ENCODE measurements at regions of chr9 and their contacts with region 1.

Region 1: DNA sequence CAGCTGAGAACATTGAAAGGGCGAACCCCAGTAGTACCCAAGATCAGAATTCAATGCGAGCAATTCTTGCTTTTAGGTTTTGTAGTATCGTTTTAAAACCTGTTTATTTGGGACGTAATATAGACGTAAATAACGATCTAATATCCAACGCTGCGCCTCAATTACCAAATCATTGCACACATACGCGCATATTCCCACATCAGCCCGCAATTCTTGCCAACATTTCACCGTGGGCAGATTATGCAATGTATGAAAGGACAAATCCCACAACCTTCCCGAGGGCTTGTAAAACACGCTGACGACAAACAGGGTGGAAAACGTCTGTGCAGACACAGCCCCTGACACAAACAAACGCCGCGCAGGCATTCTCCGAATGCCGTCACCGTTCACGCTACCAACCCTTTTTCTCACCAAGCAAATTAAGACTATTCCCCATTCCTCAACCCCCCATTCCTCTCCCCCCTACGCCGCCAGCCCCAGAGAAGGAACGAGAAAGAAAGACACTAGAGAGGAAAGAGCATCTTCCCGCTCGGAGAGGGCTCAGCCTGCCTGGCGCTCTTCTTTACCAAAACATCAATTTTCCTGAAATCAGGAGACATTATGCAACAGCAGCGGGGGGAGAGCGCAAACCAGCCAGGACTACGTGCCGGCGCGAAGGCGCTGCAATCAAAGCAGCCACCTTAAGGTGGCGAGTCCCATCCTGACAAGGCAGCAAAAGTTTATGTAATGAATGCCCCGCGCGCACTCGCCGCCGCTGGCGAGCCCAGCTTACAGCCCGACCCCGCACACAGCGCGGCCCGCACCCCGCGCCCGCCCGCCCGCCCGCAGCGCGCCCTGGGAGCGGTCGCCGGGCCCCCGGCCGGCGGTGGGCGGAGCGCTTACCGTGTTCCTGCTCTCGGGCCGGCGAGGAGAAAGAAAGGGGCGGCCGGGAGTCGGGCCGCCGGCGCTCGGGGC is 597 bp downstream of the NFIL3 start:
- DNase-seq: peak; percentile 66
- H3K4me3 ChIP-seq: peak overlapping the region; percentile 62 to 91 (median 67)
- H3K27ac ChIP-seq: peak overlapping the region; percentile 35
- H3K4me1 ChIP-seq: peaks cover 40% of the 10 kb centered on the region
- H3K27me3 ChIP-seq: no peaks in the 10 kb centered on the region
- CTCF ChIP-seq: peak in 1 of 2 donors; percentile 45

Region 2: DNA sequence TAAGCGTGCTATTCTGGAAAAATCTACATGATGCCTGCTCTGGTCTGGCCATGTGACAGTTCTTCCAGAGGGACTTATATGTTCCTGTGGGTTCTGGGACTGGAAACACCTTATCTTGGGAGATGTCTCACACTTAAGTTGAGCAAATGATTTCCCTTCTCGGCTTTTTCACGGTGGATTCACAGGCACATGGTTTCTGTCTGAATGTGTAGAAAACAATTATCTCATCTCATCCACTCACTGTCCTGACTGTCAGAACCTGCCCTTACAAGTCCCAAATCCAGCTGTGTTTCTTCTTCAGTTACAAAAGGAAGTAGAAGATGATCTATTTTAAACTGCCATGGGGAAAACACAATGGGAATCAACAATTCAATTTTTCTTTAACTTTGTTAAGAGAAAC is 437.4 kb before region 1 on chr9:
- CTCF ChIA-PET with region 1: interaction called, 3 read pairs
- dilution Hi-C with region 1: no loop called
- in situ Hi-C with region 1: no loop called
- intact Hi-C with region 1: loop called (anchors 1 kb)
- DNase-seq: peak; percentile 96
- H3K4me3 ChIP-seq: no peak overlapping the region
- H3K27ac ChIP-seq: peak overlapping the region; percentile 80
- H3K4me1 ChIP-seq: peaks cover 36% of the 10 kb centered on the region
- H3K27me3 ChIP-seq: no peaks in the 10 kb centered on the region
- CTCF ChIP-seq: no peak

Region 3: GRCh38 chr9:91089405-91090129 is 333.5 kb before region 1 on chr9:
- CTCF ChIA-PET with region 1: no interaction called
- dilution Hi-C with region 1: no loop called
- in situ Hi-C with region 1: loop called in 1 of 2 experiments (anchors 25 kb)
- intact Hi-C with region 1: loop called (anchors 1 kb)
- DNase-seq: peak; percentile 29
- H3K4me3 ChIP-seq: no peak overlapping the region
- H3K27ac ChIP-seq: no peak overlapping the region
- H3K4me1 ChIP-seq: no peaks in the 10 kb centered on the region
- H3K27me3 ChIP-seq: no peaks in the 10 kb centered on the region
- CTCF ChIP-seq: peak; percentile 39 to 67

Region 4: DNA sequence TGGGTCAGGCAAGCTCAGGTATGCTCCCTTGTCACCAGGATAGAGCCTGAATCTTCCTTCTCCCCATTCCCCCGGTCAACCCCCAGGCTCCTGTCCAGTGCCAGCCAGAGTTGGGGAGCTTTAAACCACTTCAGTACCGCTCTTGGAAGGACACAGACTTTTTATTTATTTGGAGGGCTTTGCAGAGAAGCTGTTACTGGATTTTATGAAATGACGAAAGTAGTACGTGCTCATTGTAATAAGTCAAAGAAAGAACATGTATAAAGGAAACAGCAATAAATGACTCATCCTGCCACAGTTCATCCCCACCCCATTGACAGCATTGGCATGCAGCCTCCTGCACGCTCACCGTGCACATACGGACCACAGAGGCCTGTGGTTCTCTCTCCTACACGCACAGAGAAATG is 291.6 kb before region 1 on chr9:
- CTCF ChIA-PET with region 1: no interaction called
- dilution Hi-C with region 1: no loop called
- in situ Hi-C with region 1: no loop called
- intact Hi-C with region 1: loop called (anchors 1 kb)
- DNase-seq: peak; percentile 97
- H3K4me3 ChIP-seq: no peak overlapping the region
- H3K27ac ChIP-seq: peak overlapping the region; percentile 91
- H3K4me1 ChIP-seq: peaks cover 19% of the 10 kb centered on the region
- H3K27me3 ChIP-seq: no peaks in the 10 kb centered on the region
- CTCF ChIP-seq: no peak

Region 5: DNA sequence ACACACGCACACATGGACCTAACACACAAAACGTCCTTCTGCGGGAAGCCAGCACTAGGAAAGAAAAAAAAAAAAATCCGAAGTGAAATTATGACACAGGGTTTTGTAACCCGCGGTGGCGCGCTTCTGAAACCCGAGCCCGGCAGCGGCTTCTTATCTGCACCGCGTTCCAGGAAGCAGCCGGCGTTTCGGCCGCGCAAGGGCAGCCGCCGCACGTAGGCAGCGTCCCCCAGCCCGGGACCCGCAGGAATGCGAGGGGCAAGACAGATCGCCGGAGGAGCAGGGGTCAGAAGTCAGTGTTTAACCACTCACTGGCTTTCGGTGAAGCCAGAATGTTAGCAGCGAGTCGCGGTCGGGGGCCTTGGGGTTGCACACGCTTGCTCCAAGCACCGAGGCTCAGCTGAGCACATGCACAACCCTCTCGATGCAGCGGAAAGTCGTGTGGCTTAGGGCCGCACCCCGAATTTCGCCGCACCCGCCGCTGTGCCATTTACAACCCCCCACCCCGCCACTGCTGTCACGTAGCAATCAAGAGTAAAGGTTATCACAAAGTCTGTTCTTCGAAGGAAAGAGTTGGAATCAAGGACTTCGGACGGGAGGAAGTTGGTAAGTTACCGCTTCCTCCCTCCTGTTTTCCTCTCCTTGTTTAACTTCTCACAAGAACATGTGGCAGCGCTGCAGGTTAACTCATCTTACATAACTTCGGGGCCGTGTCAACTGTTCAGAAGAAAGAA is 229.2 kb before region 1 on chr9:
- CTCF ChIA-PET with region 1: no interaction called
- dilution Hi-C with region 1: no loop called
- in situ Hi-C with region 1: no loop called
- intact Hi-C with region 1: loop called (anchors 5 kb)
- DNase-seq: peak; percentile 48
- H3K4me3 ChIP-seq: no peak overlapping the region
- H3K27ac ChIP-seq: peak overlapping the region; percentile 45
- H3K4me1 ChIP-seq: peaks cover 38% of the 10 kb centered on the region
- H3K27me3 ChIP-seq: no peaks in the 10 kb centered on the region
- CTCF ChIP-seq: no peak

Region 6: DNA sequence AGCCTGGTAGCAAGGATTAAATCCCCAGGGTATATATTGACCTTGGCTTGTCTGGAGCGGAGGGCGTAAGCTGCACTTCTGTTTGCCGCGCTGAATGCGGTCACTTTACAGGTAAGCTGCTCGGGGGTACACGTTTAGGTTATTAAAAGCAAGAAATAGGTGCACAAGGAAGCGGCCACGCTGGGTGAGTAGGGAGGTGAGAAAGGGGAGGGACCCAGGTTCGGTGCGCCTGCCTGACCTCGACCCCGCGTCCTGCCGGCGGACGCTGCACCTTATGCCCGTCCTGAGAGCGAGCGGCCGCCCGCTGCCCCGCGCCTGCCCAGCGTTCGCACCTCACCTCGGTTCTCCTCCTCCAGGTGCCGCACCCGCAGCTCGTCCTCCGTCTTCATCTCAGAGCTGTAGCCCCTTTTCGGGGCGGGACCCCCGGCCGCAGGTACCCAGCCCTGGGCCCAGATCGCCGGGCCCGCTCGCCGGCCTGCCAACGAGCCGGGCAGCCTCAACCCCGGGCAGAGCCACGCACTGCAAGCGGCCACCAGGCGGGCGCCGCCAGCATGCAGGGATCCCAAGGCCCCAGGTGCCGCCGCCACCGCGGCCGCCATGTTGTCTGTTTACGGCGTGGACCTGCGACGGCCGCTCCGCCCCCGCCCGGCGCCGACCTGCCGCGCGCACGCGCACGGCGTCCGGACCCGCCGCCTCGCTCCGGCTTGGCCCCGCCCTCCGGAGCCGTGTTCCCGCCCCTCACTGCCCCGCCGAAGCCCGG is 61.6 kb before region 1 on chr9 and contains the start of gene AUH:
- CTCF ChIA-PET with region 1: interaction called, 7 read pairs
- dilution Hi-C with region 1: no loop called
- in situ Hi-C with region 1: no loop called
- intact Hi-C with region 1: loop called (anchors 1 kb)
- DNase-seq: peak; percentile 65
- H3K4me3 ChIP-seq: peak within 1 kb of the TSS; percentile 70 to 99 (median 96)
- H3K27ac ChIP-seq: peak within 1 kb of the TSS; percentile 71
- H3K4me1 ChIP-seq: peaks cover 14% of the 10 kb centered on the region
- H3K27me3 ChIP-seq: no peaks in the 10 kb centered on the region
- CTCF ChIP-seq: no peak
- total RNA-seq, gene AUH: 10.9 to 11.5 TPM

Region 7: GRCh38 chr9:91495450-91495849 is 72.4 kb after region 1 on chr9:
- CTCF ChIA-PET with region 1: no interaction called
- dilution Hi-C with region 1: no loop called
- in situ Hi-C with region 1: no loop called
- intact Hi-C with region 1: no loop called
- DNase-seq: peak; percentile 86
- H3K4me3 ChIP-seq: no peak overlapping the region
- H3K27ac ChIP-seq: no peak overlapping the region
- H3K4me1 ChIP-seq: peaks cover 2% of the 10 kb centered on the region
- H3K27me3 ChIP-seq: peaks cover 5% of the 10 kb centered on the region
- CTCF ChIP-seq: no peak

Region 8: GRCh38 chr9:91727316-91727861 is 304.4 kb after region 1 on chr9:
- CTCF ChIA-PET with region 1: interaction called, 8 read pairs
- dilution Hi-C with region 1: no loop called
- in situ Hi-C with region 1: no loop called
- intact Hi-C with region 1: loop called (anchors 5 kb)
- DNase-seq: peak; percentile 39
- H3K4me3 ChIP-seq: no peak overlapping the region
- H3K27ac ChIP-seq: no peak overlapping the region
- H3K4me1 ChIP-seq: no peaks in the 10 kb centered on the region
- H3K27me3 ChIP-seq: no peaks in the 10 kb centered on the region
- CTCF ChIP-seq: peak; percentile 71 to 77